ENCODE measurements at regions of chr20 and their contacts with region 1.

Region 1: DNA sequence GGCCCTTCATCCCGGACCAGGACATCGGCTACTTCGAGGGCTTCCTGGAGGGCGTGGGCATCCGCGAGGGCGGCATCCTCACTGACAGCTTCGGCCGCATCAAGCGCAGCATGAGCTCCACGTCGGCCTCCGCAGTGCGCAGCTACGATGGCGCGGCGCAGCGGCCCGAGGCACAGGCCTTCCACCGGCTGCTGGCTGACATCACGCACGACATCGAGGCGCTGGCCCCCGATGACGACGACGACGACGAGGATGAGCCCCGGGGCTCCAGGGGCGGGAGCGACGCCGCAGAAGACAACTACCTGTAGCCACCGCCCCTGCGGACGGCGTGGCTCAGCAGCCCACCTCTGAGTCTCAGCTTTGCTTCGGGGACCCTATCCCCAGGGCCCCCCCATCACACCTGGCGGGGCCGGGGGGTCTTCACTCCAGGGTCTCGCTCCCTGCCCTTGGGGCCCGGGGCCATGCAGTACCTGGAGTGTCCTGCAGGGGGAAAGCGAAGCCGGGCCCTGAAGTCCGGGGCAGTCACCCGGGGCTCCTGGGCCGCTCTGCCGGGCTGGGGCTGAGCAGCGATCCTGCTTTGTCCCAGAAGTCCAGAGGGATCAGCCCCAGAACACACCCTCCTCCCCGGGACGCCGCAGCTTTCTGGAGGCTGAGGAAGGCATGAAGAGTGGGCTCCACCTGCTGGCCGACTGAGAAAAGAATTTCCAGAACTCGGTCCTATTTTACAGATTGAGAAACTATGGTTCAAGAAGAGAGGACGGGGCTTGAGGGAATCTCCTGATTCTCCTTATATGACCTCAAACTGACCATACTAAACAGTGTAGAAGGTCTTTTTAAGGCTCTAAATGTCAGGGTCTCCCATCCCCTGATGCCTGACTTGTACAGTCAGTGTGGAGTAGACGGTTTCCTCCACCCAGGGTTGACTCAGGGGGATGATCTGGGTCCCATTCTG is 20.8 kb upstream of the HCK start:
- DNase-seq: no peak
- ATAC-seq: peak; percentile 56
- H3K4me3 ChIP-seq: 0 out of 2 replicates have a peak overlapping the region, but pooled peaks have one; percentile 24
- H3K27ac ChIP-seq: no peak overlapping the region
- H3K4me1 ChIP-seq: peaks cover 28% of the 10 kb centered on the region
- H3K27me3 ChIP-seq: no peaks in the 10 kb centered on the region; a peak in 1 of 4 replicates
- CTCF ChIP-seq: peak; percentile 76 to 99 (median 96)
- EP300 ChIP-seq: no peak
- POLR2A ChIP-seq: no peak
- RAD21 ChIP-seq: peak; percentile 54

Region 2: DNA sequence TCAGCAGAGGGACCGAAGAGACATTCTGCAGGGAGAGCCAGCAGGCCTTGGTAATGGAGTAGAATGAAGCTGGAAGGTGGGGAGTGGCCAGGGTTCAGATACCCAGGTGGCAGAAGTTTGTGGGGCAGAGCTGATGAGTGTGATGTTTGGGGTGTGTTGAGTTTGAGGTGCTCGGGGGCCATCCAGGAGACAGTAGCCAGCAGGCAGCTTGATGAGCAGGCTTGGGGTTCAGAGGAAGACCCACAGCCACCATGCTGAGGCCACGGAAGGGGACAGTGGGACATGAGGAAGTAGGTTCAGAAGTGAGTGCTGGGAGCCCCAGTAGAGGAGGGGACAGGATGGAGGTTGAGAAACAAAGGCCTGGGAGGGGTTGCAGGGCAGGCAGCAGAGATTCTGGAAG is 174.8 kb before region 1 on chr20:
- CTCF ChIA-PET with region 1: interaction called, 129 read pairs
- POLR2A ChIA-PET with region 1: interaction called, 4 read pairs
- RAD21 ChIA-PET with region 1: interaction called, 26 read pairs
- SMC1A ChIA-PET with region 1: interaction called, 81 read pairs
- in situ Hi-C with region 1: no loop called
- intact Hi-C with region 1: loop called (anchors 1 kb)
- DNase-seq: no peak
- ATAC-seq: no peak
- H3K4me3 ChIP-seq: no peak overlapping the region
- H3K27ac ChIP-seq: no peak overlapping the region
- H3K4me1 ChIP-seq: peaks cover 10% of the 10 kb centered on the region
- H3K27me3 ChIP-seq: peaks cover 0 to 6% of the 10 kb centered on the region in 2 experiments; a peak in 1 of 4 replicates
- CTCF ChIP-seq: no peak
- EP300 ChIP-seq: no peak
- POLR2A ChIP-seq: no peak
- RAD21 ChIP-seq: no peak

Region 3: GRCh38 chr20:32052090-32052777 is 21.0 kb after region 1 on chr20 and contains the start of gene HCK:
- CTCF ChIA-PET with region 1: interaction called, 106 read pairs
- POLR2A ChIA-PET with region 1: interaction called, 17 read pairs
- RAD21 ChIA-PET with region 1: interaction called, 215 read pairs
- SMC1A ChIA-PET with region 1: interaction called, 42 read pairs
- in situ Hi-C with region 1: no loop called
- intact Hi-C with region 1: no loop called
- DNase-seq: no peak
- ATAC-seq: peak; percentile 85
- H3K4me3 ChIP-seq: peak within 1 kb of the TSS; percentile 88
- H3K27ac ChIP-seq: peak within 1 kb of the TSS; percentile 64
- H3K4me1 ChIP-seq: peaks cover 15% of the 10 kb centered on the region
- H3K27me3 ChIP-seq: peaks cover 3 to 7% of the 10 kb centered on the region in 2 experiments
- CTCF ChIP-seq: peak in 1 of 3 experiments; percentile 5; a peak in 1 of 6 replicates
- EP300 ChIP-seq: no peak
- POLR2A ChIP-seq: peak; percentile 55; the same call in 1 of the 2 replicates
- RAD21 ChIP-seq: no peak
- polyA plus RNA-seq, gene HCK: 1.3 to 2.1 TPM

Region 4: GRCh38 chr20:32079655-32080109 is 48.4 kb after region 1 on chr20:
- CTCF ChIA-PET with region 1: interaction called, 21 read pairs
- POLR2A ChIA-PET with region 1: no interaction called
- RAD21 ChIA-PET with region 1: interaction called, 220 read pairs
- SMC1A ChIA-PET with region 1: interaction called, 25 read pairs
- in situ Hi-C with region 1: no loop called
- intact Hi-C with region 1: no loop called
- DNase-seq: no peak
- ATAC-seq: no peak
- H3K4me3 ChIP-seq: no peak overlapping the region
- H3K27ac ChIP-seq: no peak overlapping the region
- H3K4me1 ChIP-seq: no peaks in the 10 kb centered on the region
- H3K27me3 ChIP-seq: no peaks in the 10 kb centered on the region
- CTCF ChIP-seq: no peak
- EP300 ChIP-seq: no peak
- POLR2A ChIP-seq: no peak
- RAD21 ChIP-seq: no peak

Region 5: DNA sequence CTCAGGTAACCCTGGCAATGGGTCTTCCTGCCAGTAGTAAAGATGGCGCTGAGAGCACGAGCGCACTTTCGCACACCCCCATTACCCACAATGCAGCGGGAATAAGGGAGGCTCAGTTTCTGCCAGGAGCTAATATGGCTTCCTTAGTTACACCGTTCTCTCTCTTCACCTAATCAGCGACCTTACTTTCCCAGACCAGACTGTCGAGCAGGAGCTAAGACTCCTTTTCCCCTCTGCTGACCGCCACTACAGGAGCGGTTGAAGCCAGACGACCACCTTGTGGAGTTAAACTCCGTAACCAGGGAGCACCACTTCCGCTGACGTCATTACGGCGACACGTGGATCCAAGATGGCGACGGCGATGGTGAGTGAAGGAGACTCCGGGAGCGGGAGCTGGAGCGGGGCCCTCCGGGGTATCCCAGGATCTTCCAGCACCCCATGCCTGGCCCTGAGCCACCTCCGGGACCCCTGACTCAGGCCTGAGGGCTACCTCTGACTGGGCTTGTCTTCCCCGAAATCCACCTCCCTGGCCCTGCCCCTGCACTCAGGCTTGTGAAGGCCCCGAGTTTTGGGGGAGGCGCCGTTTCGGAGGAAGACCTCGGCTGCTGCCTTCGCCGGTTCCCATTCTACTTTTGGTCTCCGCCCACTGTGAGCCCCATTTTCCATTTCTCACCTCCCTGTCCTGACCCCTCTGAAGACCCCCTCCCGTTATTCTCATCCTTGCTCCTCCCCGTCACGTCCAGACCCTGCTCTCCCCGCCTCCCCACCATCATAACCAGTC is 78.3 kb after region 1 on chr20 and contains the start of gene TM9SF4:
- CTCF ChIA-PET with region 1: interaction called, 23 read pairs
- POLR2A ChIA-PET with region 1: interaction called, 3 read pairs
- RAD21 ChIA-PET with region 1: interaction called, 5 read pairs
- SMC1A ChIA-PET with region 1: interaction called, 31 read pairs
- in situ Hi-C with region 1: no loop called
- intact Hi-C with region 1: no loop called
- DNase-seq: peak; percentile 93
- ATAC-seq: peak; percentile 86
- H3K4me3 ChIP-seq: peak within 1 kb of the TSS; percentile 98
- H3K27ac ChIP-seq: peak within 1 kb of the TSS; percentile 97
- H3K4me1 ChIP-seq: peaks cover 15% of the 10 kb centered on the region
- H3K27me3 ChIP-seq: no peaks in the 10 kb centered on the region
- CTCF ChIP-seq: no peak
- EP300 ChIP-seq: no peak
- POLR2A ChIP-seq: peak; percentile 90
- RAD21 ChIP-seq: no peak
- polyA plus RNA-seq, gene TM9SF4: 8.5 to 14.1 TPM

Region 6: GRCh38 chr20:32277361-32278198 is 246.3 kb after region 1 on chr20 and contains the start of gene KIF3B:
- CTCF ChIA-PET with region 1: no interaction called
- POLR2A ChIA-PET with region 1: no interaction called
- RAD21 ChIA-PET with region 1: no interaction called
- SMC1A ChIA-PET with region 1: no interaction called
- in situ Hi-C with region 1: no loop called
- intact Hi-C with region 1: no loop called
- DNase-seq: peak; percentile 61
- ATAC-seq: peak; percentile 84
- H3K4me3 ChIP-seq: peak within 1 kb of the TSS; percentile 98
- H3K27ac ChIP-seq: peak within 1 kb of the TSS; percentile 81
- H3K4me1 ChIP-seq: peaks cover 11% of the 10 kb centered on the region
- H3K27me3 ChIP-seq: no peaks in the 10 kb centered on the region
- CTCF ChIP-seq: no peak
- EP300 ChIP-seq: no peak; a peak in 1 of 4 replicates
- POLR2A ChIP-seq: peak; percentile 57; the same call in 1 of the 2 replicates
- RAD21 ChIP-seq: no peak
- polyA plus RNA-seq, gene KIF3B: 10.7 to 11.2 TPM